MCF 10A (cell line): ENCODE measurements at regions of chr5 and their contacts with region 1.

Region 1: GRCh38 chr5:161966564-161966963 is 101.0 kb upstream of the GABRG2 start:
- DNase-seq: peak; percentile 60
- H3K4me3 Mint-ChIP-seq: no peak overlapping the region
- H3K27ac Mint-ChIP-seq: no peak overlapping the region
- H3K4me1 Mint-ChIP-seq: no peaks in the 10 kb centered on the region
- H3K27me3 Mint-ChIP-seq: peaks cover 76% of the 10 kb centered on the region
- CTCF ChIP-seq: peak; percentile 69

Region 2: DNA sequence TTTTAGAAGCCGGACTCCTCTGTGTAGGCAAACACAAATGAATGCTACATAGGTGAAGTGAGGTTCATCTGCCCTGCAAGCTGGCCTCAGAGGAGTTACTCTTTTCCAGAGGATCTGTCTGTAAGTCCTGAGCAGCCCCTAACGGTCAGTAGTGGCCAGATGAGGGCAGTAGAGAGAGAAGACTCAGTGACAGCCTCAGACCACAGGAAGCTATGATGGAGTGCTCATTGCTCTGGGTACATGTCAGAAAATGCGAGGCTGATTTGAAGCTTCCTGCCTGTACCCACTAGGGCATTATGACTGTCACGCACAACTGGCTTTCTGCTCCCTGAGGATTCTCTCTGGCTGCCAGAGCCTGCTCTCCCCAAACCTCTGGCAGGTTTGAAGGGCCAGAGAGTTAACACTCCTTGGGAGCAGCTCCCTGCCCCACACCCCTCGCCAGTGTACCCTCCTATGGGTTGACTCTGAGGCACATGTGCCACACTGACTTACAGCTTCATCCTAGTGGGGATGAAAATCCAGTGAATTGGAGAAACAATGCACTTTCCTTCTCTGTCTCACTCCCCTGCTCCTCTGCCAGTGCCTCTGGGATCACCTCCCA is 242.5 kb after region 1 on chr5:
- CTCF ChIA-PET with region 1: interaction called, 4 read pairs
- POLR2A ChIA-PET with region 1: no interaction called
- intact Hi-C with region 1: loop called (anchors 5 kb)
- DNase-seq: peak; percentile 83
- H3K4me3 Mint-ChIP-seq: no peak overlapping the region
- H3K27ac Mint-ChIP-seq: no peak overlapping the region
- H3K4me1 Mint-ChIP-seq: peaks cover 12% of the 10 kb centered on the region
- H3K27me3 Mint-ChIP-seq: no peaks in the 10 kb centered on the region
- CTCF ChIP-seq: peak; percentile 71

Region 3: GRCh38 chr5:162837155-162837554 is 870.6 kb after region 1 on chr5:
- CTCF ChIA-PET with region 1: no interaction called
- POLR2A ChIA-PET with region 1: interaction called, 3 read pairs
- intact Hi-C with region 1: loop called (anchors 10 kb)
- DNase-seq: no peak
- H3K4me3 Mint-ChIP-seq: no peak overlapping the region
- H3K27ac Mint-ChIP-seq: no peak overlapping the region
- H3K4me1 Mint-ChIP-seq: no peaks in the 10 kb centered on the region
- H3K27me3 Mint-ChIP-seq: no peaks in the 10 kb centered on the region
- CTCF ChIP-seq: no peak

Region 4: GRCh38 chr5:162852134-162852533 is 885.6 kb after region 1 on chr5:
- CTCF ChIA-PET with region 1: interaction called, 3 read pairs
- POLR2A ChIA-PET with region 1: no interaction called
- intact Hi-C with region 1: loop called (anchors 5 kb)
- DNase-seq: no peak
- H3K4me3 Mint-ChIP-seq: no peak overlapping the region
- H3K27ac Mint-ChIP-seq: no peak overlapping the region
- H3K4me1 Mint-ChIP-seq: no peaks in the 10 kb centered on the region
- H3K27me3 Mint-ChIP-seq: peaks cover 11% of the 10 kb centered on the region
- CTCF ChIP-seq: peak; percentile 10

Region 5: DNA sequence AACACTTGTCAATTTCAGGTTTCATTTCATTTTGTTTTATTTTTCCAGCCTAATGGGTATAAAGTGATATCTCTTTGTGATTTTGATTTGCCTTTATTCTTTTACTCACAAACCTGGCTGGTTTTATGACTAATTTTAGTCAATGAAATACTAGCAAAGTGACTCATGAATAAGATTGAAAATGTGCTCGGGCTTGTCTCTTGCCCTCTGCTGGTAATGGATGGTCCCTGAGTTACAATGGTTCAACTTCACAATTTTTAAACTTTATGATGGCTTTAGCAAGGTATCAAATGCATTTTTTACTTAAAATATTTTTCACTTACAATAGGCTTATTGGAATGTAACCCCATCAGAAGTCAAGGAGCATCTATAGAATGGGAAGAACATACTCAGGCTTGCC is 1039.4 kb after region 1 on chr5:
- CTCF ChIA-PET with region 1: interaction called, 3 read pairs
- POLR2A ChIA-PET with region 1: no interaction called
- intact Hi-C with region 1: loop called (anchors 5 kb)
- DNase-seq: peak; percentile 63
- H3K4me3 Mint-ChIP-seq: no peak overlapping the region
- H3K27ac Mint-ChIP-seq: no peak overlapping the region
- H3K4me1 Mint-ChIP-seq: peaks cover 14% of the 10 kb centered on the region
- H3K27me3 Mint-ChIP-seq: no peaks in the 10 kb centered on the region
- CTCF ChIP-seq: peak; percentile 64

Region 6: DNA sequence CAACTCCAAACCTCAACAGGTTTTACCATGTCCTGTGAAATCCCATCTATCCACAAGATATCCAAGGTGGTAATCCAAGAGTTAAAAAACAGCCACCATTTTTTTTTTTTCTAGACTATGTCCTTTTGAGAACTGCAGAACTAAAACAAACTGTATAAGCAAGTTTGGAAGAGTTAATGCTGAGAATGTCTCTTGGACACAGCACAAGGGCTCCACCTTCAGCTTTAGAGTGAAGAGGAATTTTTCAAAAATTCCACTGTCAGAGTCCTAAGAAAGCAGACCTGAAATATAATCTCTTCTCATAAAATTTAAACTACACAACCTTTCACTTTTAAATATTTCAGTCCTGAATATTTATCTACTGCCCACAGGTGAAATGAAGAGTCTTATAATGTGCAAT is 1303.1 kb after region 1 on chr5:
- CTCF ChIA-PET with region 1: no interaction called
- POLR2A ChIA-PET with region 1: no interaction called
- intact Hi-C with region 1: loop called (anchors 5 kb)
- DNase-seq: peak; percentile 45
- H3K4me3 Mint-ChIP-seq: no peak overlapping the region
- H3K27ac Mint-ChIP-seq: no peak overlapping the region
- H3K4me1 Mint-ChIP-seq: no peaks in the 10 kb centered on the region
- H3K27me3 Mint-ChIP-seq: peaks cover 81% of the 10 kb centered on the region
- CTCF ChIP-seq: peak; percentile 50